MCF 10A (cell line): ENCODE measurements at regions of chr5 and their contacts with region 1.

Region 1: DNA sequence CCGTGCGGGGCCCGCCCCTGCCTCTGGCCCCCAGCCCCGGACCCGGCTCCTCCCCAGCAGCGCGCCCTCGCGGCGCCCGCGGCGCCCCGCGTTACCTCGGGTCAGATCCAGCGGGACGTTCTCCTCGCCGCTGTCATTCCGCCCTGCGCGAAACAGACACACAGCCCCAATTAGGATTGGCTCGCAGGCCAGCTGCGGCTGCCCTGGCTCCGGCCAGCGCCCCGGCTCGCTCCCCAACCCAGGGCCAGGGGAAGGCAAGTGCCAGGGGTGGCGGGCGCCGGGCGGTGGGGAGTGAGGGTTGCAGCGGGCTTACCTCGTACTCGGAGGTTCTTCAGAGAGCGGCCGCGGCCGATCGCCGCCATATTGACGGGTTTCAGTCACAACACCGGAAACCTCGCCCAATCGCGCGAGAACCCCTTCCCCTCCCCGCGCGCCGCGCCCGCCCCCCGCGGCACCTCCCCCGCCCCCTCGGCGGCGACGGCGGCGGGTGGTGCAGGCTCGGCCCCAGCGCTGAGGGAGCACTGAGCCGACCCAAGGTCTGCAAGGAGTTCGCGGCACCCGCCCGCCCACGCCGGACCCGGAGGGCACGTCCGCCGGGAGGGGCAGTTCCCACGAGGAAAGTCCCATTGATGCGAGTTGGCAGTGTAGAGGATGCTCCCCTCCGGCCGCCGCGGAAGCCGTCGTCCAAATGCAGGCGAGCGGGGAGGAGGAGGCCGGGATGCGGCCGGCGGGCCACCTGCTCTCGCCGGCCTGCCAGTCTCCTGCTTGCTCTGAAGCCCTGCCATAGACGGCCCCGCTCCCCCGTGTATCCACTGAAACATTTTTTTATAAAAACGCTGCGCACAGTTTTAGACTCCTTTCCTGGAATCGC is at the start of gene RICTOR:
- DNase-seq: peak; percentile 88
- H3K4me3 Mint-ChIP-seq: peak within 1 kb of the TSS; percentile 94
- H3K27ac Mint-ChIP-seq: peak within 1 kb of the TSS; percentile 50
- H3K4me1 Mint-ChIP-seq: peaks cover 28% of the 10 kb centered on the region
- H3K27me3 Mint-ChIP-seq: no peaks in the 10 kb centered on the region
- CTCF ChIP-seq: no peak
- total RNA-seq, gene RICTOR: 24.8 and 25.7 TPM in 2 replicates

Region 2: DNA sequence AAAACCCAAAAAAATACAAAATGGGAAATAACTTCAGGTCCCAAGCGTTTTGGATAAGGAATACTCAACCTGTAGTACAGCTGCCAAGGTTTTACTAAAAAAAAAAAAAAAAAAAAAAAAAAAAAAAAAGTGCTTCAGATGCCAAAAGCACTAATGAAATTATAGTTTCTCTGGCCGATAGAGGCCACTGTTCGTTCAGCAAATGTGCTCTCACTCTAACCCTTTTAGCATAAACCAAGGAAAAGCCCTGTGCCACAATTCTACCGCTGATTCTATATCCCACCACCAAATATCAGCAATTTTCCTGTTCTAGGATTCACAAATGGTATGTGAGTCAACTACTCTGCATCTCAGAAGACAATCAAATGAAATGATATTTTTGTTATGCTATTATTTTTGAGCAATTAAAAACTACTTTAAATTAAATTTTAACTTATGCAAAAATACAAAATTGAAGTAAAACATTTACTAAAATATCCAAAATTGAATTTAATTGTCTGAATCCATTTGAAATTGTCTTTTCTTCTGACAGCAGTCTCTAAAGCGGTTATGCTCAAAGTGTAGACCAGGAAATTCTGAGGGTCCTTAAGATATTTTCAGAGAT is 79.8 kb before region 1 on chr5:
- CTCF ChIA-PET with region 1: interaction called, 3 read pairs
- POLR2A ChIA-PET with region 1: interaction called, 3 read pairs
- intact Hi-C with region 1: loop called (anchors 1 kb)
- DNase-seq: peak; percentile 76
- H3K4me3 Mint-ChIP-seq: no peak overlapping the region
- H3K27ac Mint-ChIP-seq: no peak overlapping the region
- H3K4me1 Mint-ChIP-seq: peaks cover 6% of the 10 kb centered on the region
- H3K27me3 Mint-ChIP-seq: no peaks in the 10 kb centered on the region
- CTCF ChIP-seq: peak; percentile 45

Region 3: GRCh38 chr5:39058178-39058921 is 15.9 kb before region 1 on chr5:
- CTCF ChIA-PET with region 1: no interaction called
- POLR2A ChIA-PET with region 1: interaction called, 55 read pairs
- intact Hi-C with region 1: no loop called
- DNase-seq: no peak
- H3K4me3 Mint-ChIP-seq: peak overlapping the region; percentile 47
- H3K27ac Mint-ChIP-seq: no peak overlapping the region
- H3K4me1 Mint-ChIP-seq: peaks cover 24% of the 10 kb centered on the region
- H3K27me3 Mint-ChIP-seq: no peaks in the 10 kb centered on the region
- CTCF ChIP-seq: no peak

Region 4: DNA sequence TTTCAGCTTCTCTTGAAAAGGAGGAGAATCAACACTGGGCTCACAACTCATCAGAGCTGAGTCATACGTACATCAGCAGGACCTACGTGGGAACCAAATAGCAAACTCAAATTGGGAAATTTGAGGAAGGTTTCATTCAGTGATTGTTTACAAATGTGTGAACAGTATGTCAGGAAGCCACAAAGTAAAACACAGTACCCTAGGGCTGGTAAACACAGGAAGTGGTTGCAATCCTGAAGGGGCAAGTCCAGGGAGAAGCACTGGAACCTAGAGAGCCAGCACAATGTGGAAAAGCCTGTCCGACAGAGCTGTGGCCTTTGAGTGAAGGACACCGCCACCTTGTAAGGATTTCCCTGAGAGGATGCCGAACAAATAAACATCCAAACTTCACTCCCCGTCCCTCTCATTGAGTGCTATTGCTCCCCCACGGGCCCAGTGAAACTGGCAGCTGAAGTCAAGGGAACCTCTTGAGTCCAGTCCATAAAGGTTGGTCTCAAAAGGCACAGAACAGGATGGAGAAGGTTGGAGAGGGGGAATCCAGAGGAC is 26.7 kb after region 1 on chr5:
- CTCF ChIA-PET with region 1: interaction called, 40 read pairs
- POLR2A ChIA-PET with region 1: interaction called, 106 read pairs
- intact Hi-C with region 1: loop called (anchors 2 kb)
- DNase-seq: peak; percentile 98
- H3K4me3 Mint-ChIP-seq: peak overlapping the region; percentile 39
- H3K27ac Mint-ChIP-seq: peak overlapping the region; percentile 97
- H3K4me1 Mint-ChIP-seq: peaks cover 51% of the 10 kb centered on the region
- H3K27me3 Mint-ChIP-seq: no peaks in the 10 kb centered on the region
- CTCF ChIP-seq: no peak

Region 5: DNA sequence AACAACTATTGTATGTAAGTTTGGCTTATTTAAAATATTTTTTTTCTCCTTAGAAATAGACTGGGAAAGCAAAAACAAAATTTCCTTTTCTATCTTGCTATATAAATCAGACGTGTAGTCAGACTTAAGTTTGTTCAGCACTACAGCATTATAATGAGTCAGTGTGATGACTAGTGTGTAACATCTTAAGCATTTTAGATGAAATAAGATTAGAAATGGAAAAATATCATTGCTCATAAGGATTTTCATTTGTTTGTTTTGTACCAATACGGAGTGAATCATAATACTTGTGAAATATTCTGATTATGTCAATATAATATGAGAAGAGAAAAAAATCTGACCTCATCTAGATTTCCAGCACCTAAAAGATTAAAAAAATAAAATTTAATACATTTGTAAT is 64.6 kb after region 1 on chr5:
- CTCF ChIA-PET with region 1: no interaction called
- POLR2A ChIA-PET with region 1: interaction called, 14 read pairs
- intact Hi-C with region 1: loop called (anchors 2 kb)
- DNase-seq: peak; percentile 69
- H3K4me3 Mint-ChIP-seq: no peak overlapping the region
- H3K27ac Mint-ChIP-seq: peak overlapping the region; percentile 53
- H3K4me1 Mint-ChIP-seq: peaks cover 25% of the 10 kb centered on the region
- H3K27me3 Mint-ChIP-seq: no peaks in the 10 kb centered on the region
- CTCF ChIP-seq: no peak

Region 6: DNA sequence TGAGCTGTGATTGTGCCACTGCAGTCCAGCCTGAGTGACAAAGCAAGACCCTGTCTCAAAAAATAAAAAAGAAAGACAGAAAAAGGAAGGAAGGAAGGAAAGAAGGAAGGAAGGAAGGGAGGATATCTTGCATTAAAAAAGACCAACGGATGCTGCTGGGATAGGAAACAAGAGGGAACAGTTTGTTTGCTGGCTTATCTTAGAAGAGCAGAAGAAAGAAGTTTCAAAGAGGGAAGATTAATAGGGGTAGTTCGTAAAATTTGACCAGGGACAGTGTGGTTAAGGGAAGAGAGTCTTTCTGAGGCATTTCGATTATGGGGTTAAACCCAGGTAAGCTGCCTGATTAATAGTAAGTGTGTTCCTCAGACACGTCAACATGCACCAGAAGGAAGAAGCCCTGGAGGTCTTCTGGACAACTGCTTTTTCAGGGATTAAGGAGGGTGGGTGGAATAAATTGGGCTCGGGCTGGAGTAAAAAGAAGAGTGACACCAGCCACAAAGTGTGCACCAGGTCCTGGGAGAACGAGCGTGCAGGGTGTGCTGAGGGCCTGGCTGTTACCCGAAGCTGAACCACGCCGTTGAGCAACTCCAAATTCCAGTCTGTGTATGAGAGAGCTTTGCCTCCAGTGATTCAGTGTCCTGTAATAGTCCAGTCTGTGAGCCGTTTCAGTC is 120.3 kb after region 1 on chr5:
- CTCF ChIA-PET with region 1: no interaction called
- POLR2A ChIA-PET with region 1: interaction called, 6 read pairs
- intact Hi-C with region 1: loop called (anchors 10 kb)
- DNase-seq: peak; percentile 91
- H3K4me3 Mint-ChIP-seq: no peak overlapping the region
- H3K27ac Mint-ChIP-seq: peak overlapping the region; percentile 26
- H3K4me1 Mint-ChIP-seq: peaks cover 31% of the 10 kb centered on the region
- H3K27me3 Mint-ChIP-seq: no peaks in the 10 kb centered on the region
- CTCF ChIP-seq: no peak